Caco-2 (cell line): ENCODE measurements at regions of chr1 and their contacts with region 1.

Region 1: GRCh38 chr1:63773815-63774616 is at the start of gene ROR1:
- DNase-seq: peak; percentile 87 to 90
- H3K4me3 ChIP-seq: peak within 1 kb of the TSS; percentile 84
- H3K4me3 Mint-ChIP-seq: peak within 1 kb of the TSS; percentile 97
- H3K27ac Mint-ChIP-seq: peak within 1 kb of the TSS; percentile 77
- H3K4me1 ChIP-seq: peaks cover 13% of the 10 kb centered on the region
- H3K4me1 Mint-ChIP-seq: peaks cover 12% of the 10 kb centered on the region
- H3K27me3 ChIP-seq: no peaks in the 10 kb centered on the region
- H3K27me3 Mint-ChIP-seq: no peaks in the 10 kb centered on the region
- CTCF ChIP-seq: peak; percentile 32 to 64
- total RNA-seq, gene ROR1: 37.2 TPM in 2 replicates

Region 2: DNA sequence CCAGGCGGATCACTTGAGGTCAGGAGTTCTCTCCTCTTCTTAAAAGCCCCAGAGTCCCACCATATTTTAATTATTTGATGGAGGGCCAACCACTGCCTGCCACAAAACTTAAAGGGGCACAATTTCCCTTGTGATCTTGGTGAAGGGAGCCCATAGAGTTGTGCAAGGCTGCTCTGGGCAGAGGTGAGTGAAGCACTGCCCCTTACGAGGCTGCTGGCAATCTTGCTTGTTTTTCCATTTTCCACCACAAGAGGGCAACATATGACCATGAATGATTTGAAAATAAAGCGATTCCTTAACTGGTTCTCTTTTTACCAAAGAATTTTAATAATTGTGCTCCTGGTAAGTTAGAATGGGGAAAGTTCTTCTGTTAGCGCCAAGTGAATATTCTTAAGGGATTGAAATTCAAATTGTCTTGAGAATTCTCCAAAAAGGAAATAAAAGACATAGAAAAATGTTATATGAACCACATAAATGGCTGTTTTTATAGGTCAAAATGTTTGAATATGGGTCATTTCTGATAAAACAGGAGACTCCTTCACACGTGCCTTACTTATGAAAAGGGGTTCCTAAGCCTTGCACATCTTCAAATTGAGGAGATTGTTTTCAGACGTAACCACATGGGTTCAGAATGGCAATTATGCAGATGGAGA is 158.1 kb before region 1 on chr1:
- CTCF ChIA-PET with region 1: no interaction called
- POLR2A ChIA-PET with region 1: interaction called, 10 read pairs
- intact Hi-C with region 1: loop called (anchors 10 kb)
- DNase-seq: peak; percentile 40 to 74
- H3K4me3 ChIP-seq: no peak overlapping the region
- H3K4me3 Mint-ChIP-seq: no peak overlapping the region
- H3K27ac Mint-ChIP-seq: no peak overlapping the region
- H3K4me1 ChIP-seq: no peaks in the 10 kb centered on the region; the same call in 1 of the 2 replicates
- H3K4me1 Mint-ChIP-seq: peaks cover 11% of the 10 kb centered on the region
- H3K27me3 ChIP-seq: no peaks in the 10 kb centered on the region
- H3K27me3 Mint-ChIP-seq: no peaks in the 10 kb centered on the region
- CTCF ChIP-seq: peak; percentile 37 to 59

Region 3: DNA sequence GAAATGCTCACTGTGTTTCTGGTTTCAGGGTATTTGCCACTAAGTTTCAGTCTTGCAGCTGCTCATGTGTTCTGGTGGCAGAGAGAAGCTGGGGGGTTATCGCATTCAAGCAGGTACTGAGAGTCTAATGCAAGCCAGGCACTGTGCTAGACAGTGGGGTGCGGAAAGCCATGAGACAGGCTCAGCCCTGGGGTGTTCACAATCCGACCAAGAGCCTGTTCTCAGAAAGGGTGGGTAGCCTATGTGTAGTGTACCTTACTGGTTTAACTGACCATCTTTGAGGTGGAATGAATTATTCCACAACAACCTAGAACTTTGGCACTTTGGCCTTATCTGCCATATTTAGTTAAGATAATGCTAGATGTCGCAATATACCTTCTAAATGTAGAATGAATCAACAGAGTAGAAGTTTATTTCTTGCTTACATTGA is 55.5 kb before region 1 on chr1:
- CTCF ChIA-PET with region 1: no interaction called
- POLR2A ChIA-PET with region 1: interaction called, 5 read pairs
- intact Hi-C with region 1: loop called (anchors 5 kb)
- DNase-seq: peak; percentile 46 to 49
- H3K4me3 ChIP-seq: no peak overlapping the region
- H3K4me3 Mint-ChIP-seq: peak overlapping the region; percentile 62
- H3K27ac Mint-ChIP-seq: peak overlapping the region; percentile 91
- H3K4me1 ChIP-seq: peaks cover 69% of the 10 kb centered on the region
- H3K4me1 Mint-ChIP-seq: peaks cover 30% of the 10 kb centered on the region
- H3K27me3 ChIP-seq: no peaks in the 10 kb centered on the region
- H3K27me3 Mint-ChIP-seq: no peaks in the 10 kb centered on the region
- CTCF ChIP-seq: no peak

Region 4: GRCh38 chr1:63739452-63739851 is 34.6 kb before region 1 on chr1:
- CTCF ChIA-PET with region 1: no interaction called
- POLR2A ChIA-PET with region 1: no interaction called
- intact Hi-C with region 1: no loop called
- DNase-seq: no peak
- H3K4me3 ChIP-seq: no peak overlapping the region
- H3K4me3 Mint-ChIP-seq: no peak overlapping the region
- H3K27ac Mint-ChIP-seq: no peak overlapping the region
- H3K4me1 ChIP-seq: no peaks in the 10 kb centered on the region
- H3K4me1 Mint-ChIP-seq: peaks cover 6% of the 10 kb centered on the region
- H3K27me3 ChIP-seq: no peaks in the 10 kb centered on the region
- H3K27me3 Mint-ChIP-seq: no peaks in the 10 kb centered on the region
- CTCF ChIP-seq: no peak

Region 5: DNA sequence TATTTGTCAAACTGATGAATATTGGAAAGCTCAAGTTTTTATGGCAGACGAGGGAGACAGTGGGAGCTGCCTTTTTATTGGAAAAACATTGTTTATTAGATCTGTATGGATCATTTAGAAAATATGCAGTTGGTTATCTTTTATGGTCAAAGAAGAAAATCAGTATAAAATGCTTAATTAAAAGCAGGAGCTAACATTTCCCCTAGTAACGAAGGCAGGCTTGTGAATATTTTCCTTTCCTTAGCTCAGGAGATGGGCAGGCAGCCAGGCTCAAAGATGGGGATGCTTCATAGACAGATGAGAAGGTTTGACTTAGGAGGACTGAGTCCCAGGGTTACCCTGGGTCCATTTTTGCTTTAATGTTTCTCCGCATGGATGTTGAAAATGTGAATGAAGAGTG is 25.8 kb after region 1 on chr1:
- CTCF ChIA-PET with region 1: no interaction called
- POLR2A ChIA-PET with region 1: no interaction called
- intact Hi-C with region 1: no loop called
- DNase-seq: no peak
- H3K4me3 ChIP-seq: no peak overlapping the region
- H3K4me3 Mint-ChIP-seq: no peak overlapping the region
- H3K27ac Mint-ChIP-seq: no peak overlapping the region
- H3K4me1 ChIP-seq: no peaks in the 10 kb centered on the region
- H3K4me1 Mint-ChIP-seq: peaks cover 7% of the 10 kb centered on the region
- H3K27me3 ChIP-seq: no peaks in the 10 kb centered on the region
- H3K27me3 Mint-ChIP-seq: no peaks in the 10 kb centered on the region
- CTCF ChIP-seq: no peak

Region 6: GRCh38 chr1:63920154-63921117 is 146.4 kb after region 1 on chr1:
- CTCF ChIA-PET with region 1: no interaction called
- POLR2A ChIA-PET with region 1: no interaction called
- intact Hi-C with region 1: loop called (anchors 2 kb)
- DNase-seq: peak; percentile 55 to 75
- H3K4me3 ChIP-seq: no peak overlapping the region
- H3K4me3 Mint-ChIP-seq: peak overlapping the region; percentile 45
- H3K27ac Mint-ChIP-seq: peak overlapping the region; percentile 72
- H3K4me1 ChIP-seq: peaks cover 65% of the 10 kb centered on the region
- H3K4me1 Mint-ChIP-seq: peaks cover 53% of the 10 kb centered on the region
- H3K27me3 ChIP-seq: no peaks in the 10 kb centered on the region
- H3K27me3 Mint-ChIP-seq: no peaks in the 10 kb centered on the region
- CTCF ChIP-seq: no peak